Activated naive CD8-positive, alpha-beta T cell treated with anti-CD3 and anti-CD28 coated beads, Interleukin-2, amount 10 ng/mL, durations not matched to agents 7 days and 5 days (primary cell): ENCODE measurements at regions of chr1 and their contacts with region 1.

Region 1: GRCh38 chr1:109277434-109278204 is 5.3 kb downstream of the PSRC1 start:
- DNase-seq: peak; percentile 74
- ATAC-seq: peak; percentile 47
- H3K4me3 Mint-ChIP-seq: no peak overlapping the region
- H3K27ac Mint-ChIP-seq: peak overlapping the region; percentile 68
- H3K4me1 Mint-ChIP-seq: peaks cover 25% of the 10 kb centered on the region
- H3K27me3 Mint-ChIP-seq: no peaks in the 10 kb centered on the region

Region 2: GRCh38 chr1:109181105-109181806 is 96.4 kb before region 1 on chr1:
- POLR2A ChIA-PET with region 1: no interaction called
- DNase-seq: no peak
- ATAC-seq: no peak
- H3K4me3 Mint-ChIP-seq: no peak overlapping the region
- H3K27ac Mint-ChIP-seq: no peak overlapping the region
- H3K4me1 Mint-ChIP-seq: no peaks in the 10 kb centered on the region
- H3K27me3 Mint-ChIP-seq: no peaks in the 10 kb centered on the region

Region 3: GRCh38 chr1:109397538-109398342 is 120.1 kb after region 1 on chr1 and contains the start of gene SORT1:
- POLR2A ChIA-PET with region 1: interaction called, 22 read pairs
- DNase-seq: peak; percentile 82
- ATAC-seq: peak; percentile 98
- H3K4me3 Mint-ChIP-seq: peak within 1 kb of the TSS; percentile 87
- H3K27ac Mint-ChIP-seq: no peak within 1 kb of the TSS
- H3K4me1 Mint-ChIP-seq: peaks cover 30% of the 10 kb centered on the region
- H3K27me3 Mint-ChIP-seq: peaks cover 32% of the 10 kb centered on the region
- total RNA-seq, gene SORT1: 6.5 to 11.0 TPM